HepG2 (cell line): ENCODE measurements at regions of chr1 and their contacts with region 1.

Region 1: GRCh38 chr1:9942939-9943788 is at the starts of genes LZIC and NMNAT1:
- DNase-seq: peak; percentile 87
- ATAC-seq: peak; percentile 98
- H3K4me3 ChIP-seq: peak within 1 kb of the TSS; percentile 70 to 95 (median 92)
- H3K27ac ChIP-seq: peak within 1 kb of the TSS; percentile 91
- H3K4me1 ChIP-seq: peaks cover 49% of the 10 kb centered on the region
- H3K27me3 ChIP-seq: no peaks in the 10 kb centered on the region; a peak in 2 of 5 replicates
- CTCF ChIP-seq: no peak
- EP300 ChIP-seq: peak; percentile 49 to 57; a peak in 2 of 4 replicates
- POLR2A ChIP-seq: peak; percentile 87 to 97
- RAD21 ChIP-seq: peak; percentile 68
- total RNA-seq, gene LZIC: 71.8 and 119 TPM in 2 replicates
- total RNA-seq, gene NMNAT1: 12.2 and 14.5 TPM in 2 replicates

Region 2: GRCh38 chr1:9753121-9753531 is 190.0 kb before region 1 on chr1:
- CTCF ChIA-PET with region 1: no interaction called
- POLR2A ChIA-PET with region 1: no interaction called
- in situ Hi-C with region 1: no loop called
- intact Hi-C with region 1: no loop called
- DNase-seq: no peak
- ATAC-seq: no peak
- H3K4me3 ChIP-seq: no peak overlapping the region
- H3K27ac ChIP-seq: no peak overlapping the region
- H3K4me1 ChIP-seq: peaks cover 12% of the 10 kb centered on the region
- H3K27me3 ChIP-seq: no peaks in the 10 kb centered on the region
- CTCF ChIP-seq: no peak
- EP300 ChIP-seq: no peak
- POLR2A ChIP-seq: no peak
- RAD21 ChIP-seq: no peak

Region 3: DNA sequence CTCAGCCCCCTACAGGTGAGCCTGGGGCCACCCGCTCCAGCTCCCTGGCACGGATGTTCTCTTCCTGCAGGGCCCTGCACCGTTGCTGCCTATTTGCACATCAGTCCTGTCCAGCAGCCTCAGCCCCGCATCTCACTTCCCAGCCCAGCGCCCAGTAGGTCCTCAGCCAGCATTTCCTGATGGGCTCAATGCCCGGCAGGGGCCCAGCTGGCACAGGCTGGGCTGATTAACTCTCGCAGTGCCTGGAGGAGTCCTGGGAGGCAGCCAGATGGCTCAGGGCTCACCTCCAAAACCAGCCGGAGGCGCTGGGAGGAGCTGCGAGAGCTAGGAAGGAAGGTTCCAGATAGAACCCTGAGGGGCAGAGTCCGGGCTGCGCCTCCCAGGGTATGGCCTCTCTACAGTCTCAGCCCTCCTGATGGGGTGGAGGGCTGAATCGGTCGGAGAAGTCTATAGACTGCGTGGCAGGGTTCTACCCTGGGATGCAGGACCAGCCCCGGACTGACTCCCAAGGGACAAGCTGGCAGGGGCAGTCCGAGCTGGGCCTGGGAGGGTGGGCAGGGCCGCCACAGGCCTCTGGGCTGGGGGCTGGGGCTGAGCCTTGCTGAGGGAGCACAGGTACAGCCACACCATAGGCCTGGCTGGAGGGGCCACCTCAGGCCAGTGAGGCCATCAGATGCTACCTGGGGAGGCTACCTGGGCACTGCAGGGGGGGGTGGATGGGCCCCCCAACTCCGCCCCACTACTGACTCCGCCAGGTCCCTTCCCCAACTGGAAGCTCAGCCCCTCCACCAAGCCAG is 100.2 kb before region 1 on chr1:
- CTCF ChIA-PET with region 1: no interaction called
- POLR2A ChIA-PET with region 1: no interaction called
- in situ Hi-C with region 1: no loop called
- intact Hi-C with region 1: no loop called
- DNase-seq: no peak
- ATAC-seq: peak; percentile 40
- H3K4me3 ChIP-seq: no peak overlapping the region
- H3K27ac ChIP-seq: no peak overlapping the region
- H3K4me1 ChIP-seq: peaks cover 13% of the 10 kb centered on the region
- H3K27me3 ChIP-seq: no peaks in the 10 kb centered on the region; a peak in 1 of 5 replicates
- CTCF ChIP-seq: no peak
- EP300 ChIP-seq: no peak
- POLR2A ChIP-seq: no peak
- RAD21 ChIP-seq: no peak

Region 4: DNA sequence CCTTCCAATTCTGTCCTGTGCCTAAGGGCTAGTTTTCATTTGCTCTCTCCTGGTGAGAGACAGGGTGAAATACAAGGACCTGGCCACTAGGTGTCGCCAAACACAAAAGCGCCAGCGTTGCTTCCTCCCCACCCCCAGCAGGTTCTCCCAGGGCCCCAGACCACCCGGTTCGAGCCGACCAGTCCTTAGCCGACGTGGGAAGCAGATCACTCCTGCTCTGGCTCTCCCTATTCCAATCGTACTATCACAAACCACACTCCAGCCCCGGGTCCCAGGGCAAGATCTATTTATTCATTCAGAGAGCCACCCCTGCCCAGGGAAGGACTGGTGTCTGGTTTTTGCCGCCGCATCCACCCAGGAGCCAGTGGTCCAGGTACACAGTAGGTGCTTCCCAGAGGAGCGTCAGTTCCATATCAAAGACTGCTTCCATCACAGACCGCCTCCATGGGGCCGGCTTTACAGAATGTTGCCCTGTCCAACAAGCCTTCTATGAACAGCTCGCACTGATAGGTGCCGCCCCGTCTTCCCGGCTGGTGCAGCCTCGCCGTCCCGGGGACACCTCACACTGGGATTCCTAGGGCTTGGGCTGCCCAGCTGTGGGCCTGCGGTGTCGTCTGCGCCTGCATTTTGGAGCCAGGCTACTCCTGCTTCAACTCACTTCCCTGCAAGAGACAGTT is 68.1 kb before region 1 on chr1:
- CTCF ChIA-PET with region 1: interaction called, 39 read pairs
- POLR2A ChIA-PET with region 1: interaction called, 7 read pairs
- in situ Hi-C with region 1: loop called (anchors 5 kb)
- intact Hi-C with region 1: loop called (anchors 1 kb)
- DNase-seq: peak; percentile 68
- ATAC-seq: peak; percentile 84
- H3K4me3 ChIP-seq: peak overlapping the region in 1 of 3 experiments; percentile 23; a peak in 1 of 6 replicates
- H3K27ac ChIP-seq: peak overlapping the region; percentile 41
- H3K4me1 ChIP-seq: peaks cover 45% of the 10 kb centered on the region
- H3K27me3 ChIP-seq: no peaks in the 10 kb centered on the region
- CTCF ChIP-seq: peak; percentile 94
- EP300 ChIP-seq: no peak
- POLR2A ChIP-seq: no peak
- RAD21 ChIP-seq: peak; percentile 94

Region 5: DNA sequence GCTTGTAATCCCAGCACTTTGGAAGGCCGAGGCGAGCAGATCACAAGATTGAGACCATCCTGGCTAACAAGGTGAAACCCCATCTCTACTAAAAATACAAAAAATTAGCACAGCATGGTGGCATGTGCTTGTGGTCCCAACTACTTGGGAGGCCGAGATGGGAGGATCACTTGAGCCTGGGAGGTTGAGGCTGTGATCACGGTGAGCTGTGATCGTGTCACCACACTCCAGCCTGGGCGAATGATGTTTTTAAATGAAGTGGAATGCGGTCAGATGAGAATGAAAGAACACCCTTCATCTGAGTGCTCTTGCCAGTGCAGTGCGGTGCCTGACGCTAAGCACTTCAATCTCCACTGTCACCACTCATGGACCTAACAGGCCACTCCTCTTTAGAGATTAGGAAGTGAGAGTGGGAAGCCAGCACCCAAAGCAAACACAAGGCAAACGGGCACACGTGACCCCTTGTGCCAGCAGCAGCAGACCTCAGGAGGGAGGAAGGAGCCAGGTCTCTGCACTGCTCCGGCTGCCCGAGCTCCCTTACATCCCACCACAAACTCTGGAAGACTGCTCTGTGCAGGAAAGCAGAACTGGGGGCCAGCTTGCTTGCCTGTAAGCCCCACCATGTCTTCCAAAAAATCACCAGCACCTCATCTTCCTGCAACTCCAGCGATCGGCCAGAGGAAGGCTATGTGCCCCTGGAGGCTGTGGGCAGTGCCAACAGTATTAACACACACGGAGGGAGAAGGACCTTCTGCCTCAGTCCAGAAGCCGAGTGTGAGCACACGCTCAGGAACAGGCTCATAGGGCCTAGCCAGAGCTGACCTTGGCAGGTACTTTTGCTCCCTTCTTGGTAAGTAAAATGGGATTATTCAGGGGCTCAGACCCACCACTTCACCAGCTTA is 42.8 kb before region 1 on chr1:
- CTCF ChIA-PET with region 1: no interaction called
- POLR2A ChIA-PET with region 1: interaction called, 4 read pairs
- in situ Hi-C with region 1: no loop called
- intact Hi-C with region 1: loop called (anchors 5 kb)
- DNase-seq: peak; percentile 88
- ATAC-seq: peak; percentile 92
- H3K4me3 ChIP-seq: peak overlapping the region in 1 of 3 experiments; percentile 56; a peak in 3 of 6 replicates
- H3K27ac ChIP-seq: peak overlapping the region; percentile 56
- H3K4me1 ChIP-seq: peaks cover 58% of the 10 kb centered on the region
- H3K27me3 ChIP-seq: no peaks in the 10 kb centered on the region; a peak in 1 of 5 replicates
- CTCF ChIP-seq: no peak
- EP300 ChIP-seq: no peak
- POLR2A ChIP-seq: 0 out of 4 replicates have a peak, but pooled peaks of 1 of the 2 experiments have one; percentile 22
- RAD21 ChIP-seq: no peak; the same call in 1 of the 2 replicates

Region 6: DNA sequence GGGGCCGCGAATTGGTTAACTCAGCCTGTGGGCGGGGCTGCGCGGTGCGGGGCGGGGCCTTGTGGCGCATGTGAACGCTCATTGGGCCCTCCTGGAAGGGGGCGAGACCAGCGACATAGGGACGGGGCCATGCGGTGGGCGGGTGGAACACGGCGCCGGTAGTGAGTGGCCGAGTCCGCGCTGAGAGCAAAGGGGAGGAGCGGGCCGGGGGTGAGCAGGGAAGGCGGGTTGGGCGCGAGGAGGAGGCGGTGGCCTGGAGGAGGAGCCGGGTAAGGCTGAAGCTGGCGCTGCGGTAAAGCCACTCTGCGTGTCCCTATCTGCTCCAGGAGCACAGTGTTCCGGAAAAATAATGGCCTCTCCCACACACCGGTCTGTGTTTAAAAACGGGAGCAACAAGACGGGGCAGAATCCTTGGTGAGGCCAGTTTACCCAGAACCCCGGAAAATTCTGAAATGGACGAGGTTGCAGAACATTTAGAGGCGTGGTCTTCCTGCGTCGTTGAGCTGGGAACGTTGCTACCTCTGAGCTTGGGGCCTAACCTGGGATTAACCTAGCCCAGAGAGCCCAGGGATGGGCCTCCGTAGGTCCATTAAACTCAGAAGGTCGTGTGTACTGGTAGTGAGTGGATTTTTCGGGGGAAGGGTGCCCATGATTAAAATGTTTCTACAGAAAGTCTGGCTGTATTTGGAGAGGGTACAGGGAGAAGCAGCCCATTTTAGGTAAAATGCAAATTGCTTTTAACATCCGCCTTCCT is 32.6 kb before region 1 on chr1:
- CTCF ChIA-PET with region 1: no interaction called
- POLR2A ChIA-PET with region 1: interaction called, 51 read pairs
- in situ Hi-C with region 1: no loop called
- intact Hi-C with region 1: loop called (anchors 2 kb)
- DNase-seq: peak; percentile 96
- ATAC-seq: peak; percentile 93
- H3K4me3 ChIP-seq: peak overlapping the region; percentile 73 to 82 (median 74)
- H3K27ac ChIP-seq: peak overlapping the region; percentile 87
- H3K4me1 ChIP-seq: peaks cover 80% of the 10 kb centered on the region
- H3K27me3 ChIP-seq: no peaks in the 10 kb centered on the region; a peak in 1 of 5 replicates
- CTCF ChIP-seq: 0 out of 2 replicates have a peak, but pooled peaks have one; percentile 13
- EP300 ChIP-seq: no peak
- POLR2A ChIP-seq: peak; percentile 85 to 86
- RAD21 ChIP-seq: 0 out of 2 replicates have a peak, but pooled peaks have one; percentile 43

Region 7: DNA sequence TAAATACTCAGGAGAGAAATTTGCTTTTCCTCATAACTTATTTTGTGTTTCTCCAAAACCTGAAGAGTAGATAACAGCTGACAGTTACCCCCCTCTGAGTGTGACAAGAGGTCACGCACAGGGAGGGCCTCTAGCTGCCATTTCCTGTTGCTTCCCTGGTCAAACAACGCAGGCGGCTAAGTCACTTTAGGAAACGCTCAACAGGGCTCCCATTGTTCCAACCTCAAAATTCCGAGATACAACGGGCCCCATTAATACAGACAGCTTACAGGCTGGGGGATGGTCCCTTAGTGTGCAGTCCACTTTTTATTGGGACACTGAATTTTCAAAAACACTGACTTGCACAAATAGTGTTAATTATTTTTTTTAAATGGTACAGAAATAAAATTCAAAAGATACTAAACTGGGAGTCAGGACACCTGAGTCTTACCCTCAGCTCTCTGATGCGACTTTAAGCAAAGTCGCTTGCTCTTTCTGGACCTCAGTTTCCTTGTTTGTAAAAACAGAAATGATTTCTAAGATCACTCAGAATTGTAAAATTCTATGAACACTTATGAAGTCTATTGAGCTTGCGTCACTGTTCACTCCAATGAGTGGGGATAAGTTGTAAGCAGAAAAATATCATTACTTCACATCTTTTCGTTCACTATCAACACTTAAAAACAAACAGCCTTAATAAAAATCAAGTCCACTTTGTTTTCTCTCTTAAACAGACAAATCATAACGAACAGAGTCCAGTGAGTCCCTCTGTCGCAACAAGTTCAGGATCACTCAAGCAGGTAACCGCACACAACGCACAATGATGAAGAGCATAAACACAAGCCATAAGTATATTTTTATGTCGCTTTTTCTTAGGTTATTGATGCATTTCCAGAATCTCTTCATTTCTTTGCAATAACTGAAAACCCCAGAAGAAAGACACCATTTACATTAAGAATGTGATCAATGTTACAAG is 13.5 kb before region 1 on chr1:
- CTCF ChIA-PET with region 1: no interaction called
- POLR2A ChIA-PET with region 1: interaction called, 67 read pairs
- in situ Hi-C with region 1: no loop called
- intact Hi-C with region 1: no loop called
- DNase-seq: peak; percentile 97
- ATAC-seq: peak; percentile 97
- H3K4me3 ChIP-seq: peak overlapping the region; percentile 7 to 38 (median 36); a peak in 2 of 6 replicates
- H3K27ac ChIP-seq: peak overlapping the region; percentile 99
- H3K4me1 ChIP-seq: peaks cover 91% of the 10 kb centered on the region
- H3K27me3 ChIP-seq: no peaks in the 10 kb centered on the region
- CTCF ChIP-seq: peak; percentile 26; the same call in 1 of the 2 replicates
- EP300 ChIP-seq: peak in 1 of 2 experiments; percentile 98; a peak in 3 of 4 replicates
- POLR2A ChIP-seq: no peak
- RAD21 ChIP-seq: peak; percentile 23; the same call in 1 of the 2 replicates

Region 8: DNA sequence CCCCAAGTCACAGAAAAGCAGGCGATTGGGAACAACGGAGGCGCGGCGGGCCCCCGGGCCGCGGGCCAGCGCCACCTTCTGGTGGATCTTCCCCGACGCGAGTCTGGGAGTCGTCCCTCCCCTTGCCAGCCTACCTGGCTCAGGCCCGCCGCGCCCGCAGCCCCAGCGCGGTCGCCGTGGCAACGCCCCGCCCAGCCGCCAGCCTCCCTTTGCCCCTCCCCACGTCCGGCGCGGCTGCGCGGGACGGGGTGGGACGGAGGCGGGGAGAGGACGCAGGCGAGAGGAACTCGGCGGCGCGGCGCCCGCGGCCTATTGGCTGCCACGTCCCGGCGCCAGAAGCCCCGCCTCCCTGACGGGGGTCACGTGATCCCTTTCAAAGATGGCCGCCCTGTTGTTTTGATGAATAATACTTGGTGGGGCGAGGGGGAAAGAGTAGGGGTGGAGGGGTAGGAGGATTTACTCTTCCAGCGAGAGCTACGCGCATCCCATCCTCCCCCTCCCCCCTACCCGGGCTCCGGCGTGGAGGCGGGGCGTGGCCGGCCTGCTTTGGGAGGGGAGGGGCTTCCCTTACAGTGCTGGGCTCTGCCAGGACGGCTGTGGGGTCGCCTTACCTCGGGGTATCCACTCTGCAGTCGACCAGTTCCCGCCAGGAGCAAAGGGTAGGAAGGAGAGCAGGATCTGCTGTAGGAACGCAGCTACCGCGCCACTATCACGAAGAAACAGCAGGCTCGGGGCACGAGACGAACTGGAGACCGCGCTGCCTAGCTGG is 89.6 kb after region 1 on chr1 and contains the start of gene UBE4B:
- CTCF ChIA-PET with region 1: interaction called, 3 read pairs
- POLR2A ChIA-PET with region 1: interaction called, 12 read pairs
- in situ Hi-C with region 1: loop called (anchors 5 kb)
- intact Hi-C with region 1: loop called (anchors 2 kb)
- DNase-seq: peak; percentile 94
- ATAC-seq: peak; percentile 95
- H3K4me3 ChIP-seq: peak within 1 kb of the TSS; percentile 70 to 89 (median 84)
- H3K27ac ChIP-seq: peak within 1 kb of the TSS; percentile 84
- H3K4me1 ChIP-seq: peaks cover 11% of the 10 kb centered on the region
- H3K27me3 ChIP-seq: no peaks in the 10 kb centered on the region; a peak in 1 of 5 replicates
- CTCF ChIP-seq: peak; percentile 93
- EP300 ChIP-seq: no peak
- POLR2A ChIP-seq: peak; percentile 55 to 65
- RAD21 ChIP-seq: peak; percentile 95
- total RNA-seq, gene UBE4B: 24.8 and 32.0 TPM in 2 replicates